Calu3 (cell line): ENCODE measurements at regions of chr9 and their contacts with region 1.

Region 1: GRCh38 chr9:121545875-121546423 is 46.3 kb upstream of the GGTA1 start:
- DNase-seq: peak; percentile 92
- H3K4me3 Mint-ChIP-seq: no peak overlapping the region
- H3K27ac Mint-ChIP-seq: no peak overlapping the region
- H3K4me1 Mint-ChIP-seq: peaks cover 3% of the 10 kb centered on the region
- H3K27me3 Mint-ChIP-seq: peaks cover 15% of the 10 kb centered on the region
- CTCF ChIP-seq: peak; percentile 76

Region 2: DNA sequence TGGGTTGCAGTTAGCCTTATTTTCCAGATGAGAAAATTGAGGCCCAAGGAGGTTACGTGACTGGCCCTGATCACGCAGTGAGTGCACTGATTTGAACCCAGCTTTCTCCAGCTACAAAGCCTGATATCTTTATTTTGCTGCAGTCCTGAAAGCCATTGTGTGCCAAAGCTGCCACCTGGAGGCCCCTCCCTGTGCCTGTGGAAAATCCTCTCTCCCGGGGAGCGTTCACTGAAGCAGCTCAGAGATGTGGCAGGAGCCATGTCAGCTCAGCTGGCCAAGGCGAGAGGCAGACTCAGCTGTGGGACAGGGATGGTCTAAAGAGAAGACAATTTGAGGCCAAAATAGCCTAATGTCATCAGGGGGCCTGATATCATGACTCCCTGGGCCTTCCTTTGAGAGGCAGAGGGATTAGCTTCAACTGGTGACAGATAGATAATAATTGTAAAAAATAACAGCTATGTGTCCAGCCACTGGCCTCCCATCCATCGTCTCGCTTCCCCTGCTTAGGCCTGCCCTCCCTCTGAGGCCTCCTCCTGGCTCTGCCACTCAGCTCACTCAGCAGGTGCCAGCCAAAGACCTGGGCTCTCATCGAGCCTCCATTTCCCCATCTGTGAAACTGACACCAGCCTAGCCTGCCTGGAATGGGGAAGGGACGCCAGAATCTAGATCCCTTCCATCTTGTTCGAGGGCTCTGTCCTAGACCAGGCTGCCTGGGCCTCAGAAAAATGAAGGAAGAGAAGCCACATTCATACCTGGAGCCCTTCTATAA is 28.0 kb after region 1 on chr9:
- CTCF ChIA-PET with region 1: interaction called, 10 read pairs
- intact Hi-C with region 1: no loop called
- DNase-seq: no peak
- H3K4me3 Mint-ChIP-seq: no peak overlapping the region
- H3K27ac Mint-ChIP-seq: no peak overlapping the region
- H3K4me1 Mint-ChIP-seq: peaks cover 2% of the 10 kb centered on the region
- H3K27me3 Mint-ChIP-seq: peaks cover 8% of the 10 kb centered on the region
- CTCF ChIP-seq: no peak

Region 3: GRCh38 chr9:121646992-121647695 is 101.2 kb after region 1 on chr9:
- CTCF ChIA-PET with region 1: no interaction called
- intact Hi-C with region 1: no loop called
- DNase-seq: no peak
- H3K4me3 Mint-ChIP-seq: no peak overlapping the region
- H3K27ac Mint-ChIP-seq: no peak overlapping the region
- H3K4me1 Mint-ChIP-seq: peaks cover 12% of the 10 kb centered on the region
- H3K27me3 Mint-ChIP-seq: no peaks in the 10 kb centered on the region
- CTCF ChIP-seq: no peak

Region 4: DNA sequence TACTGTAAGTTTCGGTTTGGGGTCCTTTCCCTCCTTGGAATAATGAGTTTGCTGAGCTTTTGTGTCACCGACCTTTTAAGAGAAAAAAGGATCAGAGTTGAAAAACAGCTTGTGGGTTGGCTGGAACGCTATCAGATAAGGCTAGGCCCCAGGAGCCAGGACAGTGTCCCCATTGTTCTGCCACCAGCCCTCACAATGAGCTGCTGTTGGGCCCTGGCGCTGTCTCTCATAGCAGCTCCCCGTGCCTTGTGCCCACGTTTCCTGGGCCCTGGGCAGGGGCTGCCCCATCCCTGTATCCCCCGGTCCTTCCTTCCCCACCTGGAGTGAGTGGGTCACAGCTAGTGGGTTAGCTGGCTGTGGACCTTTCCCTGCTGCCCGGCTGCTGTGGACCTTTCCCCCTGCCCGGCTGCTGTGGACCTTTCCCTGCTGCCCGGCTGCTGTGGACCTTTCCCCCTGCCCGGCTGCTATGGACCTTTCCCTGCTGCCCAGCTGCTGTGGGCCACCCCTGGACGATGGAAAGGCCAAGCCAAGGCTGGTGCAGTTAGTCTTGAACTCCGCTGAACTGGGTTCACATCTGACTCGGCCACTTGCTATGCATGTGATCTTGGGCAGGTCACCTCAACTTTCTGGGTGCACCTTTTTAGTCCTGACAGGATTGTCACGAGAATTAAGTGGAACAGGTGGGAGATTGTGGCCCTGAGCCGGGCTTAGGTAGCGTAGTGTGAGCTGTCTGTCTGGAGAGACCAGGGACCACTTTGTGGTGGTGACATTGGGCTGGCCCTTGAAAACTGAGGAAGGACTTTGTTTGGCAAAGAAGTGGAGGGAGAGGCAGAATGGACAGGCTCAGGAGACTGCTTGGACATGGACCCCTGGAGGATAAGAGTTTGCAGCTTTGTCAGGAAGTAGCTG is 205.0 kb after region 1 on chr9:
- CTCF ChIA-PET with region 1: interaction called, 10 read pairs
- intact Hi-C with region 1: no loop called
- DNase-seq: peak; percentile 73
- H3K4me3 Mint-ChIP-seq: peak overlapping the region; percentile 10
- H3K27ac Mint-ChIP-seq: peak overlapping the region; percentile 46
- H3K4me1 Mint-ChIP-seq: peaks cover 40% of the 10 kb centered on the region
- H3K27me3 Mint-ChIP-seq: no peaks in the 10 kb centered on the region
- CTCF ChIP-seq: no peak

Region 5: GRCh38 chr9:121992571-121993212 is 446.7 kb after region 1 on chr9:
- CTCF ChIA-PET with region 1: interaction called, 4 read pairs
- intact Hi-C with region 1: loop called (anchors 10 kb)
- DNase-seq: peak; percentile 38
- H3K4me3 Mint-ChIP-seq: no peak overlapping the region
- H3K27ac Mint-ChIP-seq: no peak overlapping the region
- H3K4me1 Mint-ChIP-seq: peaks cover 8% of the 10 kb centered on the region
- H3K27me3 Mint-ChIP-seq: no peaks in the 10 kb centered on the region
- CTCF ChIP-seq: peak; percentile 43

Region 6: GRCh38 chr9:122092611-122093506 is 546.9 kb after region 1 on chr9 and contains the start of gene TTLL11:
- CTCF ChIA-PET with region 1: no interaction called
- intact Hi-C with region 1: loop called (anchors 10 kb)
- DNase-seq: peak; percentile 92
- H3K4me3 Mint-ChIP-seq: peak within 1 kb of the TSS; percentile 83
- H3K27ac Mint-ChIP-seq: peak within 1 kb of the TSS; percentile 57
- H3K4me1 Mint-ChIP-seq: peaks cover 20% of the 10 kb centered on the region
- H3K27me3 Mint-ChIP-seq: peaks cover 38% of the 10 kb centered on the region
- CTCF ChIP-seq: no peak
- total RNA-seq, gene TTLL11: 10.4 and 10.5 TPM in 2 replicates